Naive thymus-derived CD4-positive, alpha-beta T cell (primary cell): ENCODE measurements at regions of chr1 and their contacts with region 1.

Region 1: GRCh38 chr1:198713081-198713480 is 74.2 kb downstream of the PTPRC start:
- DNase-seq: no peak
- ATAC-seq: peak; percentile 10
- H3K4me3 ChIP-seq: no peak overlapping the region
- H3K4me3 Mint-ChIP-seq: no peak overlapping the region
- H3K27ac ChIP-seq: peak overlapping the region; percentile 15
- H3K27ac Mint-ChIP-seq: peak overlapping the region in 8 of 9 donors; percentile 48 to 90 (median 70)
- H3K4me1 ChIP-seq: peaks cover 6 to 20% of the 10 kb centered on the region in 2 donors
- H3K4me1 Mint-ChIP-seq: peaks cover 20 to 78% (median 63%) of the 10 kb centered on the region in 7 donors
- H3K27me3 ChIP-seq: no peaks in the 10 kb centered on the region
- H3K27me3 Mint-ChIP-seq: no peaks in the 10 kb centered on the region

Region 2: DNA sequence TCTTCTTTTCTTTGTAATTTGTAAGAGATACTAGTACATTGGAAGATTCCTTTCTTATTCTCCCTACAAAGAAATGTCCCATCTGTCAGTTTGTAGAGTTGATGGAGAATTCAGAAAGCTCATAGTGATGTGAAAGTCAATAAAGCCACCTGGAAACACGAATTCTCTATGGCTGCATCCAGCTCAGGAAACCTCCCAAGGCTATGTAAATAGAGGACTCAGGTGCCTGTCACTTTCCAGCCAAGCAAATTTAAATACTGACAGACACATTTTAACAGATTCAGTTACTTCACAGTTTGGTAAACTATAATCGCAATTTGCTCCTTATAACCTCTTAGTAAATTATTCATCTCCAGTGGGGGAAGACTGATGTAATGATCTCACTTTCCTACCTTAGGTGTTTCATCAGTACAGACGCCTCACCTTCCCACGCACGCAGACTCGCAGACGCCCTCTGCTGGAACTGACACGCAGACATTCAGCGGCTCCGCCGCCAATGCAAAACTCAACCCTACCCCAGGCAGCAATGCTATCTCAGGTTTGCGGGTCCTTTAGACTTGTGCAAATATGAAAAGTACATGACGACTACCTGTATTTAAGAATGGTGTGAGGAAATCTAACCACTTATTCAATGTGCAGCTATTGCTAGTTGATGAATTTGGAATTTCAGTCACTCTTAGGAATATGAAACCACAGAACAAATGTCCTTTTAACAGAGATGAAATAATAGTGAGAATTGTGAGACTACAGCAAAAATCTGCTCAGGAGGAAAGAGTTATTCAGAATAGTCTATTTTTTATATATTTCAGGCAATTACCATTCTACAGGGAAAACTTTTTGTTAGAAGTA is 13.7 kb before region 1 on chr1:
- CTCF ChIA-PET with region 1: no interaction called
- POLR2A ChIA-PET with region 1: interaction called, 4 read pairs
- intact Hi-C with region 1: loop called in 1 of 2 experiments (anchors 1 kb)
- DNase-seq: peak; percentile 34 to 68 (median 64)
- ATAC-seq: peak; percentile 84
- H3K4me3 ChIP-seq: no peak overlapping the region
- H3K4me3 Mint-ChIP-seq: peak overlapping the region; percentile 13 to 68 (median 40)
- H3K27ac ChIP-seq: peak overlapping the region; percentile 46
- H3K27ac Mint-ChIP-seq: peak overlapping the region; percentile 50 to 93 (median 87)
- H3K4me1 ChIP-seq: peaks cover 42 to 52% of the 10 kb centered on the region in 2 donors
- H3K4me1 Mint-ChIP-seq: peaks cover 46 to 97% (median 88%) of the 10 kb centered on the region in 7 donors
- H3K27me3 ChIP-seq: no peaks in the 10 kb centered on the region
- H3K27me3 Mint-ChIP-seq: no peaks in the 10 kb centered on the region

Region 3: GRCh38 chr1:198726455-198726854 is 13.4 kb after region 1 on chr1:
- CTCF ChIA-PET with region 1: interaction called, 3 read pairs
- POLR2A ChIA-PET with region 1: interaction called, 4 read pairs
- intact Hi-C with region 1: loop called in 1 of 2 experiments (anchors 1 kb)
- DNase-seq: no peak
- ATAC-seq: no peak
- H3K4me3 ChIP-seq: no peak overlapping the region
- H3K4me3 Mint-ChIP-seq: peak overlapping the region in 1 of 10 donors; percentile 14
- H3K27ac ChIP-seq: no peak overlapping the region
- H3K27ac Mint-ChIP-seq: peak overlapping the region in 8 of 9 donors; percentile 59 to 89 (median 82)
- H3K4me1 ChIP-seq: peaks cover 28 to 32% of the 10 kb centered on the region in 2 donors
- H3K4me1 Mint-ChIP-seq: peaks cover 26 to 84% (median 69%) of the 10 kb centered on the region in 7 donors
- H3K27me3 ChIP-seq: no peaks in the 10 kb centered on the region
- H3K27me3 Mint-ChIP-seq: no peaks in the 10 kb centered on the region

Region 4: GRCh38 chr1:198749279-198749678 is 36.2 kb after region 1 on chr1:
- CTCF ChIA-PET with region 1: no interaction called
- POLR2A ChIA-PET with region 1: no interaction called
- intact Hi-C with region 1: loop called (anchors 5 kb)
- DNase-seq: no peak
- ATAC-seq: no peak
- H3K4me3 ChIP-seq: no peak overlapping the region
- H3K4me3 Mint-ChIP-seq: no peak overlapping the region
- H3K27ac ChIP-seq: no peak overlapping the region
- H3K27ac Mint-ChIP-seq: peak overlapping the region in 3 of 9 donors; percentile 13 to 30 (median 14)
- H3K4me1 ChIP-seq: peaks cover 3 to 10% of the 10 kb centered on the region in 2 donors
- H3K4me1 Mint-ChIP-seq: peaks cover 6 to 24% (median 15%) of the 10 kb centered on the region in 7 donors
- H3K27me3 ChIP-seq: no peaks in the 10 kb centered on the region
- H3K27me3 Mint-ChIP-seq: no peaks in the 10 kb centered on the region

Region 5: DNA sequence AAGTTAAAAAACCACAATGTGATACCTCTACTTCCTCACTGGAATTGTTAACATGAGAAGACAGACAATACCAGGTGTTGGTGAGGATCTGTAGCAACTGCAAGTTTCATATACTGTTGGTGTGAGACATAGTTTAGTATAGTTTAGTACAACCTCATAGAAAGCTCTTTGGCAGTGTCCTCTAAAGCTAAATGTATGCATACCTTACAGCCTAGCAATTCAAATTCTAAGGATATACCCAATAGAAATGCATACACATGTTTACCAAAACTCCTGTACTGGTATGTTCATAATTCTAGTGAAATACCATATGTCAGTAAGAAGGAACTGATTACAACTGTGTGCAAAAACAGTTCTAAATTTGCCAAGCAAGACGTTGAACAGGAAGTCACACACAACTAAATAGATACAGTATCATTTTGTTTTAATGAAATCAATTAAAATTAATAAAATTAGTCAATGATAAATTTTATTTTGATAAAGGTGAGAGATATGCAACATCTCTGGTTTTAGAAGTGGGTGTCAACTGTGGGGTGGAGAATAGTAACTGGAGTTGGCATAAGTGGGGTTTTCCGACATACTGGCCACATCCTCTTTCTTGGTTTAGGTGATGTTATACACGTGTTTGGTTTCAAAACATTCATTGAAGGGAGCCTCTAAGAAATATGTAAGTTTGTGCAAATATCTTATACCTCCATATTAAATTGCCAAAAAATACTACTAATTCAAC is 376.5 kb after region 1 on chr1:
- CTCF ChIA-PET with region 1: no interaction called
- POLR2A ChIA-PET with region 1: no interaction called
- intact Hi-C with region 1: no loop called
- DNase-seq: peak in 8 of 9 donors; percentile 25 to 72 (median 48)
- ATAC-seq: peak; percentile 99
- H3K4me3 ChIP-seq: no peak overlapping the region
- H3K4me3 Mint-ChIP-seq: peak overlapping the region in 8 of 10 donors; percentile 7 to 53 (median 48)
- H3K27ac ChIP-seq: no peak overlapping the region
- H3K27ac Mint-ChIP-seq: peak overlapping the region in 2 of 9 donors; percentile 20 to 80
- H3K4me1 ChIP-seq: peaks cover 10 to 21% of the 10 kb centered on the region in 2 donors
- H3K4me1 Mint-ChIP-seq: peaks cover 4 to 43% (median 19%) of the 10 kb centered on the region in 7 donors
- H3K27me3 ChIP-seq: no peaks in the 10 kb centered on the region
- H3K27me3 Mint-ChIP-seq: peaks cover 0 to 4% (median 0%) of the 10 kb centered on the region in 5 donors